Endothelial cell of umbilical vein (primary cell): ENCODE measurements at regions of chr17 and their contacts with region 1.

Region 1: DNA sequence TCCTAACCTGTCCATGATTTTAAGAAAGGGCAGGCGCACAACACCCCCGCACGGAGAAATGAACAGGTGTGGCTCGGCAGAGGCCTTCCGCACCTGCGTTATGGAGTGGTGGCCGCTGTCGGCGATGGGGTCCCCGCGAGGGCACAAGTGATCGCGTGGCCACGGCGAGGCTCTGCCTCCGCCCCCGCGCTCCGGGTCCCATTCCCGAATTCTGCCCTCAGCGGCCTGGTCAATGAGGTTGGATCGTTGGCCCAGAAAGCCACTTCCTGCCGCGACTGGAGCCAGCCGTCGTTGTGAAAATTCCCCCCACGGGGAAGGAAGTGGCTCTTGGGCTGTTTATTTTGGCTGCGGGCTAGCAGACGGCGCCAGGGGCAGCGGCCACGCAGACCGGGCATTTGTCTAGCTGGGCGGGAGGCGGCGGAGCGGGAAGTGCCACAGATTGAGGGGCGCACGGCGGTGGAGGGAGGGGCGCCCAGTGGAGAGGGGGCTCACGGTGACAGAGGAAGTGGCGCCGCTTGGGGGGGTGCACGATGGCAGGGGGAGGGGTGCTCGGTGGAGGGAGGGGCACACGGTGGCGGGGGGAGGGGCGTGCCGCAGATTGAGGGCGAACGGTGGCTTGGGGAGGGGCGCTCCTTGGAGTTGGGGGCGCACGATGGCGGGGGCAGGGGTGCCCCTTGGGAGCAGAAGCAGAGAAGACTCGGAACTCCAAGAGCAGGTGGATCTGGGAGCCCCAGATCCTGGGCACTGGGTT is 25.0 kb downstream of the MRC2 start:
- DNase-seq: peak; percentile 83
- H3K4me3 ChIP-seq: peak overlapping the region; percentile 50 to 69 (median 55)
- H3K27ac ChIP-seq: peak overlapping the region; percentile 92
- H3K4me1 ChIP-seq: peaks cover 16% of the 10 kb centered on the region
- H3K27me3 ChIP-seq: no peaks in the 10 kb centered on the region
- CTCF ChIP-seq: no peak
- POLR2A ChIP-seq: no peak

Region 2: GRCh38 chr17:62572888-62573401 is 79.5 kb before region 1 on chr17:
- CTCF ChIA-PET with region 1: no interaction called
- POLR2A ChIA-PET with region 1: no interaction called
- dilution Hi-C with region 1: no loop called
- intact Hi-C with region 1: loop called (anchors 1 kb)
- DNase-seq: peak; percentile 86
- H3K4me3 ChIP-seq: peak overlapping the region in 2 of 3 experiments; percentile 10 to 38
- H3K27ac ChIP-seq: peak overlapping the region; percentile 94
- H3K4me1 ChIP-seq: peaks cover 28% of the 10 kb centered on the region
- H3K27me3 ChIP-seq: no peaks in the 10 kb centered on the region
- CTCF ChIP-seq: no peak
- POLR2A ChIP-seq: no peak

Region 3: GRCh38 chr17:62627219-62627910 is 25.1 kb before region 1 on chr17 and contains the start of gene MRC2:
- CTCF ChIA-PET with region 1: no interaction called
- POLR2A ChIA-PET with region 1: no interaction called
- dilution Hi-C with region 1: no loop called
- intact Hi-C with region 1: loop called (anchors 1 kb)
- DNase-seq: peak; percentile 68
- H3K4me3 ChIP-seq: peak within 1 kb of the TSS; percentile 33 to 63 (median 51)
- H3K27ac ChIP-seq: peak within 1 kb of the TSS; percentile 50
- H3K4me1 ChIP-seq: peaks cover 6% of the 10 kb centered on the region
- H3K27me3 ChIP-seq: no peaks in the 10 kb centered on the region
- CTCF ChIP-seq: peak in 1 of 2 donors; percentile 20
- POLR2A ChIP-seq: peak; percentile 50
- total RNA-seq, gene MRC2: 52.7 and 52.9 TPM in 2 replicates

Region 4: DNA sequence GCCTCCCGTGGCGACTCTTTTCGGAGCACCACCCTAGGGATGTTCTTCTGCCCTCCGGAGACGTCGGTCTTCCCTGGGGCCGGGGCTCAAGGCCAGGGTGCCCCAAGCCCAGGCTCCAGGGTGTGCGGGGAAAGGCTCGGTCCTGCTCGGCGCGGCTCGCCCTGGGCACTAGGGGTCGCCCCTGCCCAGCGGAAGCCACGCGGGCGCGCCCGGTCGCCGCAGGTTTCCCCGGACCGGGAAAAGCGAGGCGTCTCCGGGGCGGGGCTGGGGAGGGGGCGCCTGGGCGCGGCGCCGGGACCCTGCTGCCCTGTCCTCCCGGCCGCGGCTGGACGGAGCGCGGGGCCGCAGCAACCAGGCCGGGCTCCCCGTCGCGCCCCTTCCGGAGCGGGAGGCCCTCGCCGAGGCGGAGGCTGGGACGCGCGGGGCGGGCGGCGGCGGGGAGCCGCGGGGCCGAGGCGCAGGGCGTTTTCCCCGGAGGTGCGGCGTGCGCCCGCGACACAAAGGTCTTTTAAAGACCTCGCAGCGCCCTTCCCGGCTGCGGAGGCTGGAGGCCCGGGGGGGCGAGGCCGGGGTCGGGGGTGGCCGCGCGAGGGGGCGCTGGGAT is 51.5 kb after region 1 on chr17:
- CTCF ChIA-PET with region 1: no interaction called
- POLR2A ChIA-PET with region 1: no interaction called
- dilution Hi-C with region 1: no loop called
- intact Hi-C with region 1: no loop called
- DNase-seq: peak; percentile 44
- H3K4me3 ChIP-seq: peak overlapping the region; percentile 23 to 56 (median 48)
- H3K27ac ChIP-seq: peak overlapping the region; percentile 14
- H3K4me1 ChIP-seq: peaks cover 32% of the 10 kb centered on the region
- H3K27me3 ChIP-seq: peaks cover 0 to 8% of the 10 kb centered on the region in 2 experiments
- CTCF ChIP-seq: peak; percentile 79 to 87
- POLR2A ChIP-seq: no peak

Region 5: DNA sequence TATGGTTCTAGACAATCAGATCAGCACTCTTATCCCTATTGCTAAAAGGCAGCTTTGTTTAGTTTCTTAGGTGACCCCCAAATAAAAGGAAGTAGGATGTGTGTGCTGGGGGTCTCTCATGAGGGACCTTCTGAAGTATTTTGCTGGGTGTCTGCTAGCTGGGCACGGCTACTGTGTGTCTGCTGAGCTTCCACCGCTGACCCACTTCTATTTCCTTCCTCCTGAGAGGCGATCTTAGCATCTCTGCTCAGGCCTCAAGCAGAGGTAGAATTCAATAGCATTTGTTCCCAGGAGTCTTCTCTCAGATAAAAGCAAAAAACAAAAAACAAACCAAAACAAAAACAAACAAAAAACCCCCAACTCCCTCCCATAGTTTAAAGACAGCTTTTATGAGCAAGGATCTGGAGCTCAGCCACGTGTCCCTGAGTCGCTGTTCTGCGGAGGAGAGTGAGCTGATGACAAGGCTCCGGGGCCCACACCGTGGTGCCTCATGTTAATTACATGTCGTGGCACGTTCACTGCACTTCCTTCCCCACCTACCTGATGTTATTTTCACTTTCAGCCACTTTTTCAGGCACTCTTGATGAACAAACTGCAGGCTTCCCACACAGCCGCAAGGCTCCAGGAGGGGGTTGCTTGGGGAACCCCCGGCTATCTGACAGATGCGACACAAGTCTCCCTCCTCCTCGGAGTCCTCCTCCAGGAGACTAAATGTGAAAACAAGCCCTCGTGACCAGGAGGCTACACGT is 72.1 kb after region 1 on chr17:
- CTCF ChIA-PET with region 1: no interaction called
- POLR2A ChIA-PET with region 1: no interaction called
- dilution Hi-C with region 1: no loop called
- intact Hi-C with region 1: no loop called
- DNase-seq: no peak
- H3K4me3 ChIP-seq: no peak overlapping the region
- H3K27ac ChIP-seq: no peak overlapping the region
- H3K4me1 ChIP-seq: peaks cover 3% of the 10 kb centered on the region
- H3K27me3 ChIP-seq: peaks cover 7 to 9% of the 10 kb centered on the region in 2 experiments
- CTCF ChIP-seq: no peak
- POLR2A ChIP-seq: no peak